Activated CD4-positive, alpha-beta memory T cell treated with anti-CD3 and anti-CD28 coated beads, Interleukin-2, amount 10 ng/mL, durations not matched to agents 7 days and 5 days (primary cell): ENCODE measurements at regions of chr9 and their contacts with region 1.

Region 1: DNA sequence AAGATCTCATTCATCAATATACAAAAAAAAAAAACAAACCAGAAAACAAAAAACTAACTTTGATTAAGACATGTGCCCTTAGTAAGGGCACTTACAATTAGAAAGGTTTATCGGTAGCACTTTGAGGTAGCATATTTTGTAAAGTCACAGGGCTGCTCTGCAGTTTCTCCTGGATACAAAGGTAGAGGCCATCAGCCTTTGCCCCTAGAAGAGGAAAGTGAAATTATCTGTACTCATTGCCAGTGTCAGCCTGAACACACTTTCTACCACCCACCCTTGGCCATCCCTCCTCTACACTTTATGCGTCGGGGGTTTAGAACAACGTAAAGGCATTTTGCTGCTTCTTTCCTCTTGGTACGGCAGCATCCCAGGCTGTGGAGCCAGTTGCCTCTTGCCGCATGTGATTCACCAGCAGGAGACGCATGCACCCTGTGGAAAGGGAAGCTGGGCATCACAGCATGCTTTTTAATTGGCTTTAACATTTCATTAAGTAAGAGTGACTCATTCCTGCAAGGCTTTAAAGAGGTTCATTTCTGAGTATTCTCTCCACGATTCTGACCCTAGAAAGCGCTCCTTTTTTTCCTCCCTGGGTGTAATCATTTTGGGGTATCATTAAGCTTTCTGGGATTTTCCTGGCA is 84.6 kb downstream of the CEMIP2 start:
- DNase-seq: no peak
- H3K4me3 Mint-ChIP-seq: peak overlapping the region; percentile 53
- H3K27ac Mint-ChIP-seq: peak overlapping the region; percentile 80
- H3K4me1 Mint-ChIP-seq: peaks cover 64% of the 10 kb centered on the region
- H3K27me3 Mint-ChIP-seq: no peaks in the 10 kb centered on the region

Region 2: GRCh38 chr9:71614409-71615010 is 69.2 kb before region 1 on chr9:
- CTCF ChIA-PET with region 1: no interaction called
- POLR2A ChIA-PET with region 1: no interaction called
- DNase-seq: no peak
- H3K4me3 Mint-ChIP-seq: no peak overlapping the region
- H3K27ac Mint-ChIP-seq: no peak overlapping the region
- H3K4me1 Mint-ChIP-seq: no peaks in the 10 kb centered on the region
- H3K27me3 Mint-ChIP-seq: peaks cover 8% of the 10 kb centered on the region

Region 3: GRCh38 chr9:71638627-71639026 is 45.1 kb before region 1 on chr9:
- CTCF ChIA-PET with region 1: interaction called, 21 read pairs
- POLR2A ChIA-PET with region 1: interaction called, 27 read pairs
- DNase-seq: peak; percentile 59
- H3K4me3 Mint-ChIP-seq: peak overlapping the region; percentile 57
- H3K27ac Mint-ChIP-seq: peak overlapping the region; percentile 94
- H3K4me1 Mint-ChIP-seq: peaks cover 42% of the 10 kb centered on the region
- H3K27me3 Mint-ChIP-seq: no peaks in the 10 kb centered on the region

Region 4: DNA sequence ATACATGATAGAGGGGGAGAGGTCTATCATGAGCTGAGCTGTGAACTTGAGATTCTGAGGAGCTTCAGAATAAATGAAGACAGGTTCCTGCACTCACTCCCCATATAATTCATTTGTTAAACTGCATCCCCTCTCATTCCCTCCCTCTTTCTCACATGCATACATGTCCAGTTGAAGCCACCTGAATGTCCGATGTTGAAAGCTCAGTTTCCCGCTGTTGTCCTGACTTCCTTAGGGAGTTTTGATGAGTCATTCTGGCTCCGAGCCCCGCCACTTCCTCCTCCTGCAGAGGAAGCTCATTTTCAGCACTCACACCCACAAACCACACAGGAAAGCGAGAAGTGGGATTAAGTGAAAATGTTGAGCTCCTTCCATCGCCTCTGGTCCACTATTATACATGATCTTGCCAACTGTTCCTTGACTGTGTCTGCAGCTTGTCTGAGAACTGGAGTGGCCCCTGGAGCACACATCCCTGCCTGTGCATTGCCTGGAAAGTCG is 36.6 kb before region 1 on chr9:
- CTCF ChIA-PET with region 1: interaction called, 6 read pairs
- POLR2A ChIA-PET with region 1: interaction called, 38 read pairs
- DNase-seq: peak; percentile 39
- H3K4me3 Mint-ChIP-seq: peak overlapping the region; percentile 55
- H3K27ac Mint-ChIP-seq: peak overlapping the region; percentile 37
- H3K4me1 Mint-ChIP-seq: peaks cover 59% of the 10 kb centered on the region
- H3K27me3 Mint-ChIP-seq: peaks cover 21% of the 10 kb centered on the region

Region 5: DNA sequence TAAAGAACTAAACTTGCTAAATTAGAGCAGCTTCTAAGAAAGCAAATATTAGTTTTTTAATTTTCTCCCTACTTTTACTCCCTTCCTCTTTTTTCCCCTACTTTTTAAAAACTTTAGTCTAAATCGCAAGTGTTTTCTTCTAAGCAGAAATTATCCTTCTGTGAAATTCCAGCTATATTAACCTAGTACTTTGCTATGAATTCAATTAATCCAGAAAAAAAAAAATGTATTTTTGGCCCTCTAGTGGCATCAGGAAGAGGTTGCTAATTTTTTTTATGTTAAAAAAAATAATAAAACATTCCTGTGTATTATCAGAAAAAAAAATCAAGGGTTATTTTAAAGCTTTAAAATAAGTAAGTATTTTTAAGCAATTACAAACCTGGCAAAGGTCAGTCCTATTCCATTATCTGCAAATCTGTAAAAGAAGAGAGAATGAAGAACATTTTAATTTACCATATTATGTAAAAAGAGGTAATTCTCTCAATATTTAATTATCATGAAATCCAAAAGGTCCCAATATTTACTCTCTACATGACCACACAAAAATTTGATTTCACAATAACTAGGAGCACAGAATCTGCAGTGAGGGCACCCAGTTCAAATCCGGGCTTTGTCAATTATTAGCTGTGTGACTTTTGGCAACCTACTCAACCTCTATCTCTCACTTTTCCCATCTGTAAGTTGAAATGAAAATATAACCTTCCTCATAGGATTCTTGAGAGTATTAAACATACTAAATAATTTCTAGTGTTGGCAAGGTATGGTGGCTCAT is 32.6 kb after region 1 on chr9:
- CTCF ChIA-PET with region 1: interaction called, 27 read pairs
- POLR2A ChIA-PET with region 1: interaction called, 3 read pairs
- DNase-seq: no peak
- H3K4me3 Mint-ChIP-seq: no peak overlapping the region
- H3K27ac Mint-ChIP-seq: no peak overlapping the region
- H3K4me1 Mint-ChIP-seq: peaks cover 3% of the 10 kb centered on the region
- H3K27me3 Mint-ChIP-seq: no peaks in the 10 kb centered on the region